Naive thymus-derived CD4-positive, alpha-beta T cell (primary cell): ENCODE measurements at regions of chr2 and their contacts with region 1.

Region 1: GRCh38 chr2:231557571-231558237 is 27.5 kb upstream of the NMUR1 start:
- DNase-seq: peak; percentile 29 to 79 (median 76)
- ATAC-seq: peak; percentile 93
- H3K4me3 ChIP-seq: no peak overlapping the region
- H3K4me3 Mint-ChIP-seq: no peak overlapping the region
- H3K27ac ChIP-seq: no peak overlapping the region
- H3K27ac Mint-ChIP-seq: no peak overlapping the region
- H3K4me1 ChIP-seq: peaks cover 0 to 5% of the 10 kb centered on the region in 2 donors
- H3K4me1 Mint-ChIP-seq: peaks cover 0 to 33% (median 9%) of the 10 kb centered on the region in 7 donors
- H3K27me3 ChIP-seq: no peaks in the 10 kb centered on the region
- H3K27me3 Mint-ChIP-seq: peaks cover 0 to 3% (median 0%) of the 10 kb centered on the region in 5 donors

Region 2: GRCh38 chr2:231104115-231104713 is 453.5 kb before region 1 on chr2:
- CTCF ChIA-PET with region 1: interaction called, 6 read pairs
- POLR2A ChIA-PET with region 1: no interaction called
- intact Hi-C with region 1: loop called in 1 of 2 experiments (anchors 1 kb)
- DNase-seq: peak in 8 of 9 donors; percentile 10 to 58 (median 40)
- ATAC-seq: peak; percentile 84
- H3K4me3 ChIP-seq: no peak overlapping the region
- H3K4me3 Mint-ChIP-seq: no peak overlapping the region
- H3K27ac ChIP-seq: no peak overlapping the region
- H3K27ac Mint-ChIP-seq: peak overlapping the region in 2 of 9 donors; percentile 10 to 12
- H3K4me1 ChIP-seq: no peaks in the 10 kb centered on the region
- H3K4me1 Mint-ChIP-seq: peaks cover 0 to 6% (median 5%) of the 10 kb centered on the region in 7 donors
- H3K27me3 ChIP-seq: no peaks in the 10 kb centered on the region
- H3K27me3 Mint-ChIP-seq: no peaks in the 10 kb centered on the region

Region 3: DNA sequence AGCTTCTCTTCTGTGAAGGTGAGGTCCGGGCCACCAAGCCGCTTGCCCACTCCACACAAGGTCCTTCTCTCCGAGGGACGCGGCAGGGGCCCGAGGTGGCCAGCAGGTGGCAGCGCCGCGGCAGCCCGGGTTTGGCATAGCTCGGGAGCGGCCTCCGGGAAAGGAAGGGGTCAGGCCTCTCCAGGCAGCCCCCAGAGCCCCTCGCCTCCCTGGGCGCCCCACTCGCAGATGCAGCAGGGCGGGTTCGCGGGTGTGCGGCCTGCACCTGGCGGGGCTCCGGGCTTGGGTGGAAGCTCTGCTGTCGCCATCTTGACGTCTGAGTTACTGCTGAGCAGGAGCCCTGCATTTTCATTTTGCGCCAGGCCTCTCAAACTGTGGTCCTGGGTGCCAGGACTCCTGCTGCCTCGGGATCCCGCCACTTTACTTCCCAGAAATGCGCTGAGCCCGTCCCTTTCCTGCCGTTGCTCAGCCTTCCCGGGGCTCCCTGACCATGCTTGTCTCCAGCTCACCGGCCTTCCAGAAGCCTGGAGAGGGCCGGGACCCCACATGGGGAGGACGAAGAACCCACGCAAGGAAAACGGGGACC is 74.8 kb before region 1 on chr2:
- CTCF ChIA-PET with region 1: interaction called, 9 read pairs
- POLR2A ChIA-PET with region 1: interaction called, 5 read pairs
- intact Hi-C with region 1: loop called (anchors 1 kb)
- DNase-seq: peak; percentile 52 to 82 (median 70)
- ATAC-seq: peak; percentile 86
- H3K4me3 ChIP-seq: peak overlapping the region; percentile 73
- H3K4me3 Mint-ChIP-seq: peak overlapping the region; percentile 62 to 87 (median 82)
- H3K27ac ChIP-seq: peak overlapping the region; percentile 83
- H3K27ac Mint-ChIP-seq: peak overlapping the region; percentile 81 to 96 (median 89)
- H3K4me1 ChIP-seq: peaks cover 0 to 4% of the 10 kb centered on the region in 2 donors
- H3K4me1 Mint-ChIP-seq: peaks cover 0 to 18% (median 11%) of the 10 kb centered on the region in 7 donors
- H3K27me3 ChIP-seq: no peaks in the 10 kb centered on the region
- H3K27me3 Mint-ChIP-seq: no peaks in the 10 kb centered on the region

Region 4: GRCh38 chr2:231530091-231531011 is 27.4 kb before region 1 on chr2 and contains the start of gene NMUR1:
- CTCF ChIA-PET with region 1: interaction called, 5 read pairs
- POLR2A ChIA-PET with region 1: no interaction called
- intact Hi-C with region 1: loop called (anchors 1 kb)
- DNase-seq: peak; percentile 33 to 86 (median 59)
- ATAC-seq: peak; percentile 95
- H3K4me3 ChIP-seq: peak within 1 kb of the TSS; percentile 33
- H3K4me3 Mint-ChIP-seq: peak within 1 kb of the TSS in 9 of 10 donors; percentile 29 to 83 (median 50)
- H3K27ac ChIP-seq: no peak within 1 kb of the TSS
- H3K27ac Mint-ChIP-seq: peak within 1 kb of the TSS in 3 of 9 donors; percentile 21 to 60 (median 36)
- H3K4me1 ChIP-seq: peaks cover 0 to 20% of the 10 kb centered on the region in 2 donors
- H3K4me1 Mint-ChIP-seq: peaks cover 0 to 28% (median 7%) of the 10 kb centered on the region in 7 donors
- H3K27me3 ChIP-seq: no peaks in the 10 kb centered on the region
- H3K27me3 Mint-ChIP-seq: peaks cover 15 to 39% (median 18%) of the 10 kb centered on the region in 5 donors
- total RNA-seq, gene NMUR1: 0.72 to 7.0 (median 1.4) TPM in 3 of 5 experiments, not detected in the others

Region 5: DNA sequence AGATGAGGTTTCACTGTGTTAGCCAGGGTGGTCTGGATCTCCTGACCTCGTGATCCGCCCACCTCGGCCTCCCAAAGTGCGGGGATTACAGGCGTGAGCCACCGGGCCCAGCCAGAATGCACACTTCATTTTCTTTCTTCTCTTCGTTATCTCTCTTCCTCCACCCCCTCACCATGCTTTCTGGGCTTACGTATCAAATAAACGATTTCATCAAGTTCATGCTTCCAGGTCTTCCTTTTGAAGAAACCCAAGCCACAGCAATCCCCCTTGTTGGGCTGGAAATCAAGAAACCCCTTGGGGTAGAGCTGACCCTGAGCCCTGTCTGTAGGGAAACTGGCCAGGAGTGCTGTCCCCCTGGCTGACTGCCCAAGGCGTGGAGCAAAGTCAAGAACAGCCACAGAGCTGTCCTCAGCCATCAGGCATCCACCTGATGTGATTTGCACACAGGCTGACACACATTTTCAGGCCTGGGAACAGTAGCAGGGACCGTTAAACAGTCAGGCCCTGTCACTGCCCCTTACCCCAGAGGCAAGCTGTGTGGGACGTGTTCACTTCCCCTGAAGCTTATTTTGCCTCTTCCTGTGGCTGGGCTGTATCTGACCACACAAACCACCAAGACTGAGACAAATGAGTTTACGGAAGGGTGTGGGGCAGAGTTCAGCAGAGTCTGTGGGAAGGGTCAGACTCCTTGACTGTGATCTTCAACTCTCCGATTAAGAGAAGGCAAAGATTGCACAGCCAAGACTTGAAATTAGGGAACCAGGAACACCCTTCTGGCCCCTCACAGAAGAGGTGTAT is 12.4 kb before region 1 on chr2:
- CTCF ChIA-PET with region 1: interaction called, 3 read pairs
- POLR2A ChIA-PET with region 1: no interaction called
- intact Hi-C with region 1: loop called in 1 of 2 experiments (anchors 1 kb)
- DNase-seq: peak in 4 of 9 donors; percentile 13 to 71 (median 23)
- ATAC-seq: peak; percentile 96
- H3K4me3 ChIP-seq: peak overlapping the region; percentile 35
- H3K4me3 Mint-ChIP-seq: peak overlapping the region; percentile 43 to 81 (median 75)
- H3K27ac ChIP-seq: no peak overlapping the region
- H3K27ac Mint-ChIP-seq: peak overlapping the region; percentile 37 to 96 (median 66)
- H3K4me1 ChIP-seq: peaks cover 15 to 18% of the 10 kb centered on the region in 2 donors
- H3K4me1 Mint-ChIP-seq: peaks cover 13 to 42% (median 22%) of the 10 kb centered on the region in 7 donors
- H3K27me3 ChIP-seq: no peaks in the 10 kb centered on the region
- H3K27me3 Mint-ChIP-seq: peaks cover 0 to 14% (median 0%) of the 10 kb centered on the region in 5 donors